Activated CD4-positive, alpha-beta memory T cell treated with anti-CD3 and anti-CD28 coated beads for 36 hours (primary cell): ENCODE measurements at regions of chr10 and their contacts with region 1.

Region 1: DNA sequence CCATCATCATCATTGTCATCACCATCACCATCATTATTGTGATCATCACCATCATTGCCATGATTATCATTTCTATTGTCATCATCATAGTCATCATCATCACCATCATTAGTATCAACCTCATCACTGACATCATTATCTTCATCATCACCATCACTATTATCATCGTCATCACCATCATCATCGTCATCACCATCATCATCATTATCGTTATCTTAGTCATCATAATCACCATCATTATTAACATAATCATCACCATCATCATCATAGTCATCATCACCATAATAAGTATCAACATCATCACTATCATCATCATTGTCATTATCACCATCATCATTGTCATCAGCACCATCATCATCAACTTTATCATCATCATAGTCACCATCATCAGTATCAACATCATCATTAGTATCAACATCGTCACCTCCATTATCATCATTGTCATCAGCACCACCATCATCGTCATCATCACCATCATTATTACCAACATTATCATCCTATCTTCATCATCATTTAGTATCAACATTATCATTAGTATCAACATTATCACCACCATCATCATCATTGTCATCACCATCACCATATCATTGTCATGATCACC is 241.3 kb downstream of the ADARB2 start:
- DNase-seq: no peak
- H3K4me3 Mint-ChIP-seq: no peak overlapping the region
- H3K27ac Mint-ChIP-seq: no peak overlapping the region
- H3K4me1 Mint-ChIP-seq: no peaks in the 10 kb centered on the region
- H3K27me3 Mint-ChIP-seq: peaks cover 3% of the 10 kb centered on the region

Region 2: GRCh38 chr10:1476455-1476803 is 19.6 kb before region 1 on chr10:
- CTCF ChIA-PET with region 1: no interaction called
- POLR2A ChIA-PET with region 1: no interaction called
- intact Hi-C with region 1: loop called (anchors 1 kb)
- DNase-seq: no peak
- H3K4me3 Mint-ChIP-seq: no peak overlapping the region
- H3K27ac Mint-ChIP-seq: no peak overlapping the region
- H3K4me1 Mint-ChIP-seq: no peaks in the 10 kb centered on the region
- H3K27me3 Mint-ChIP-seq: peaks cover 7% of the 10 kb centered on the region